Heart left ventricle (tissue), 16 donors: ENCODE measurements at regions of chr3 and their contacts with region 1.

Region 1: GRCh38 chr3:149566292-149566975 is 91.4 kb downstream of the WWTR1 start:
- DNase-seq: no peak
- ATAC-seq: peak in 1 of 4 donors; percentile 21
- H3K4me3 ChIP-seq: no peak overlapping the region
- H3K27ac ChIP-seq: peak overlapping the region in 5 of 12 donors; percentile 9 to 33 (median 26)
- H3K4me1 ChIP-seq: peaks cover 0 to 69% (median 24%) of the 10 kb centered on the region in 12 donors
- H3K27me3 ChIP-seq: no peaks in the 10 kb centered on the region
- CTCF ChIP-seq: no peak
- POLR2A ChIP-seq: no peak

Region 2: DNA sequence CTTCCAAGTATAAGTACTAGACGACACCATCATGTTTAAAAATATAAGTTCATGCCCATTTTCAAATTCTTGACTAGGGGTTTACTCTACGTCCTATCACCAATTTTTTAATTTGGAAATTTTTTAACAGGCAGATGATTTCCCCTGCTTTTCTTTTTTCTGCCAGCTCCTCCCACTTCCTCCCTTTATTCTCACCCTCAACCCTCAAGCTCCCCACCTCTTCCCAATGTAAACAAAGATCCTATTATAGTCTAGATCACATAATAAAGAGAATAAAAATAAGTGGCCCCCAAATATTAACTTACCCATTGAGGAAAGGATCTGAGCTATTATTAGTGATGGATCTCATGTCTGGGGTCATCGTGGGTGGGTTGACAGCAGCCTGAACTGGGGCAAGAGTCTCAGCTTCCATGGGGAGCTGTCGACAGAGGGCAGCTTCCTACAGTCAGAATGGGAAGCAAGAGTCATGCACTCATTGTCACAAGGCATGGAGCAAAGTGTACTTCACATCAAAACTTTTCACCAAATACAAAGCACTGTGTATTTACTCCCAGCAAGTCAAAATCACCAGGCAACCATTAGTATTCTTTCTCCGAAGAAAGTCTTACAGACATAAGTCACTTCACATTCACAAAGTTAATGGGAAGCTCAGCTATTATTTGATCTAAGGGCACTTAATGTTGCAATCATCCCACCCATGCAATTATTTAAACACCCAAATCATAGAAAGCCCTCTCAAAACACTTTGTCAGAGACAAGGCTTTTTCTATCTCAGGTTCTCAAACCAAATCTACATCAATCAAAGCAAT is 38.7 kb before region 1 on chr3:
- intact Hi-C with region 1: loop called in 1 of 10 experiments (anchors 5 kb)
- DNase-seq: peak in 3 of 5 donors; percentile 28 to 39 (median 34)
- ATAC-seq: peak; percentile 74 to 79 (median 75)
- H3K4me3 ChIP-seq: no peak overlapping the region
- H3K27ac ChIP-seq: peak overlapping the region in 11 of 12 donors; percentile 5 to 64 (median 44)
- H3K4me1 ChIP-seq: peaks cover 0 to 43% (median 24%) of the 10 kb centered on the region in 12 donors
- H3K27me3 ChIP-seq: no peaks in the 10 kb centered on the region
- CTCF ChIP-seq: peak in 10 of 12 donors; percentile 7 to 61 (median 45)
- POLR2A ChIP-seq: no peak

Region 3: DNA sequence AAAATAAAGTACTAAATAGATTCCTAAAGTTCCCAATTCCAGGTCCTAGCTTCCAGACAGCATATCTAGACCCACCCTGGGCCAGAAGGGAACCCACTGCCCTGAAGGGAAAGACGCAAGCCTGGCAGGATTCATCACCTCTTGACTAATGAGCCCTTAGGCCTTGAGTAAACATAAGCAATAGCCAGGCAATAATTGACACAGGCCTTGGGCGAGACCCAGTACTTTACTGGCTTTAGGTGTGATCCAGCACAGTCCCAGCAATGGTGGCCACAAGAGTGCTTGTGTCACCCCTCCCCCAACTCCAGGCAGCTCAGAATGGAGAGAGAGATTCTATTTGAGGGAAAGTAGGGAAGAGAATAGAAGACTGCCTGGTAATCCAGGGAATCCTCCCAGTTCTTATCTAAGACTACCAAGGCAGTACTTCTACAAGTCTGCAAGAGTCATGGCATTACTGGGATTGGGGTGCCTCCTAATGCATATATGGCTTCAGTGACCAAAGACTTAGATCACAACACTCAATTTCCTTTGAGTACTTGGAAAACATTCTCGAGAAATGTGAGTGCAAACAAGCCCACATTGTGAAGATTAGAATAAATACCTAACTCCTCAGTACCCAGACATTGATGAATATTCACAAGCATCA is 121.8 kb after region 1 on chr3:
- intact Hi-C with region 1: no loop called
- DNase-seq: no peak
- ATAC-seq: no peak
- H3K4me3 ChIP-seq: no peak overlapping the region
- H3K27ac ChIP-seq: no peak overlapping the region
- H3K4me1 ChIP-seq: no peaks in the 10 kb centered on the region
- H3K27me3 ChIP-seq: no peaks in the 10 kb centered on the region
- CTCF ChIP-seq: no peak
- POLR2A ChIP-seq: no peak